ENCODE measurements at regions of chr22 and their contacts with region 1.

Region 1: GRCh38 chr22:31148953-31149627 is 8.8 kb upstream of the PLA2G3 start:
- DNase-seq: no peak

Region 2: DNA sequence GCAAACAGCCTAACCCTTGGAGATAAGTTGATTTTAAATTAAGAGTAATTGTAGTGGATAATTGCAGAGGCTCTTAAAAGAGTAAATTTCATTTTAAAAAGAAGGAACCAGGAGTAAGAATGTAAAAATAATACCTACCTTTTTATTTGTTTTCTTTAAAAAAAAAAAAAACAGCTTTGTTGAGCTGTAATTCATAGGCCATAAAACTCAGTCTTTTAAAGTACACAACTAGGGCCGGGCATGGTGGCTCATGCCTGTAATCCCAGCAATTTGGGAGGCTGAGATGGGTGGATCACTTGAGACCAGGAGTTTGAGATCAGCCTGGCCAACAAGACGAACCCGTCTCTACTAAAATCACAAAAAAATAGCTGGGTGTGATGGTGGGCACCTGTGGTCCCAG is 1223.7 kb before region 1 on chr22:
- intact Hi-C with region 1: no loop called
- DNase-seq: no peak

Region 3: GRCh38 chr22:30634471-30635233 is 514.4 kb before region 1 on chr22:
- intact Hi-C with region 1: loop called (anchors 10 kb)
- DNase-seq: peak; percentile 94

Region 4: DNA sequence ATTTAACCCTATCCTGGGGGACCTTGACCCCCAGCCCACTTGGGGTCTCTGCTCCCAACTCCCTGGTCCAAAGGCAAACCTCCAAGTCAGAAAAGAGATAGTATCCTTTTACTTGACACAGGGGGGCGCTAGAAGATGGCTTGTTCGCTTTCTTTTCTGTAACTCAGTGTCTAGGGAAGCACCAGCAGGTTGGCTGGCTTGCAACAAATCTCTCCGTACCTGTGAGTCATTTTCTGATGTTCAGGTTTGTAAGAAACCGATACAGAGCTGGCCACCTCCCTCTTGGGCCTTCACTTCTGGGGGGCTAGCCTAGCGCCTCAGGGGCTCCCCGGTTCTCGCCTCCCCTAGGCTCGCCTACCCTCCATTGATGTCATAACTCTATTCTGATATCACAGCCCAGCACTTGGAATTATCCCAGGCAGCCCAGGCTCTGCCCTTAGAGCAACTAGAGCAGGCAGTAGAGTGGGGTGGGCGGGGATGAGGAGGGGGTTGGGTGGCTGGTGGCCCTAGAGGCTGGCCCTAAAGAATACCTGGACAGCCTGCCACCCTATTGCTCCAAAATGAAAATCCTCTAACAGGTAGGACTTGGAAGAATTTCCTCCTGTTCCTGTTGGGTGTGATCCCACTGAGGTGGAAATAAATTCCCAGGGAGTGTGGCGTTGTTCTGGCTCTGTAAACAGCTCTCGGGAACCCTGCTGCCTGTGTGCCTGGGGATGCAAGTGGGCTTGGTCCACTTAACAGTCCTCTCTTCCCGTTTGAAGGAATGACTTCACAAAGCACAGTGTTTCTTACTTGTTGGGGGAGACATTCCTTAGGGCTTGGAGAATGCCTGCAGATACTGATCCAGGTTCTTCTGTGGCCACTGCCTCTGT is 385.0 kb before region 1 on chr22:
- intact Hi-C with region 1: loop called (anchors 5 kb)
- DNase-seq: no peak

Region 5: GRCh38 chr22:30947816-30948454 is 201.2 kb before region 1 on chr22:
- intact Hi-C with region 1: loop called (anchors 2 kb)
- DNase-seq: no peak

Region 6: DNA sequence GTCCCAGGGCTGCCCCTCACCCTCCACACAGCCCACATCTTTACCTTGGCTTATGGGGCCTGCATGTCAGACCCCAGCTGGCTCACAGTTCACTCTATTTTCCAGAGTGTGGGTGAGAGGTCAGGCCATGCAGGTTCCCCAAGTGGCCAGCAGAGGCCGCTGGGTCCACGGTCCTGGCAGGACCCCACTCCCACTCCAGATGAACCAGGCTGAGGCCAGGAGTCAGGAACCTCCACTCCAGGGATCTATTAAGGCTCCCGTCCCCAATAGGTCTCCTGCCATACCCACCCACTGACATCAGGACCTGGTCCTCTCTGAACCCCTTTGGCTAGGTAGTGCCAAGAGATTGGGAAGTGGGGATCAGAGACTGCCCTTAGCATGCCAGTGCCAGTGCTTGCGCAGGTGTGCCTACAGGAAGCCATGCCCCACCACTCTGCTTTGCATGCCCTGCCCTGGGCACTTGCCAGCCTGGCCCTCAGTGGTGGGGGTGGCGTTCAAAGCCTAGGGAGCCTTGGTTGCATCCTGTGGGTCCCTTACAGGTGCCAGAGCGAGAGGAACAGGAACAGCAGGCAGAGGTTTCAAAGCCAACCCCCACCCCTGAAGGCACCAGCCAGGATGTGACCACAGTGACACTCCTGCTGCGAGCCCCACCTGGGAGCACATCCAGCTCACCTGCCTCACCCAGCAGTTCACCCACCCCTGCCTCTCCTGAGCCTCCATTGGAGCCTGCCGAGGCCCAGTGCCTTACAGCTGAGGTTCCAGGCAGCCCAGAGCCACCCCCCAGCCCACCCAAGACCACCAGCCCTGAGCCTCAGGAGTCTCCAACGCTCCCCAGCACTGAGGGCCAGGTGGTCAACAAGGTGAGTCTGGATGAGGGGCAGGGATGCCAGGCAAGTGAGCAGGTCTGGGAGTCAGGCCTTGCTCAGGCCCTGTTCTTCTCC is 59.7 kb before region 1 on chr22:
- intact Hi-C with region 1: loop called (anchors 2 kb)
- DNase-seq: no peak

Region 7: GRCh38 chr22:31107178-31107893 is 41.8 kb before region 1 on chr22 and contains the start of gene SELENOM:
- intact Hi-C with region 1: loop called (anchors 2 kb)
- DNase-seq: peak; percentile 98
- total RNA-seq, gene SELENOM: 77.7 TPM

Region 8: DNA sequence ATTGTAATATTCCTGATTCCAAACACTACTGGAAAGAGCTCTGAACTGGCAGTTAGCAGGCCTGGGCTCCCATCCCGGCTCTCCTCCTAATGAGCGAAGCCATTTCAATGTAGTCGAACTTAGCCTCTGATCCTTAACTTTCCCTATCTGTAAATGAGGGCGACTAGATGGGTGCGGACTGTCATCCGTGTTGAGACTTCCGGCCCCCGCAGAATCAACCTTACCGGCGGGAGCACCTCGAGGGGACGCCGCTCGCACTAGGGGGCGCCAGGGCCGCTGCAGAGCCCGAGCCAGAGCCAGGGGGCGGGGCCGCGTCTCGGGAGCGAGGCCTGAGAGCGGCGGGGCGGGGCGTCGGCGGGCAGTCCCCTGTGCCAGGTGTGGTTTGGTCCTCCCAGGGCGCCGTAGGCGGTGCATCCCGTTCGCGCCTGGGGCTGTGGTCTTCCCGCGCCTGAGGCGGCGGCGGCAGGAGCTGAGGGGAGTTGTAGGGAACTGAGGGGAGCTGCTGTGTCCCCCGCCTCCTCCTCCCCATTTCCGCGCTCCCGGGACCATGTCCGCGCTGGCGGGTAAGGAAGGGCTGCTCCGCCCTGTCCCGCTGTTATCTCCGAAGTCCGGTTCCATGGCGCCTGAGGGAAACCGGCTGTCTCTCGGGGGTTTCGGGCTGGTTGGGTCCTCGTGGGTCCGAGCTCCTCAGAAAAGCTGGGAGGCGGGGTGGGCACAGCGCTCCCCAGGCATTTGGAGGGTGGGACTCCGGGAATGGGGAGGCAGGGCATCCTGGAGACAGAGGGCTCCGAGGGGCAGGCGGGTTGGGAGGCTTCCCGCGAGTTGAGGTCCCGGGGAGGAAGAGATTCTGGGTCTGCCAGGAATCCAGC is 63.0 kb after region 1 on chr22 and contains the start of gene LIMK2:
- intact Hi-C with region 1: no loop called
- DNase-seq: peak; percentile 99
- total RNA-seq, gene LIMK2: 13.1 TPM